Activated B cell treated with CpG ODN at 0.5 μM for 24 hours (primary cell): ENCODE measurements at regions of chr9 and their contacts with region 1.

Region 1: DNA sequence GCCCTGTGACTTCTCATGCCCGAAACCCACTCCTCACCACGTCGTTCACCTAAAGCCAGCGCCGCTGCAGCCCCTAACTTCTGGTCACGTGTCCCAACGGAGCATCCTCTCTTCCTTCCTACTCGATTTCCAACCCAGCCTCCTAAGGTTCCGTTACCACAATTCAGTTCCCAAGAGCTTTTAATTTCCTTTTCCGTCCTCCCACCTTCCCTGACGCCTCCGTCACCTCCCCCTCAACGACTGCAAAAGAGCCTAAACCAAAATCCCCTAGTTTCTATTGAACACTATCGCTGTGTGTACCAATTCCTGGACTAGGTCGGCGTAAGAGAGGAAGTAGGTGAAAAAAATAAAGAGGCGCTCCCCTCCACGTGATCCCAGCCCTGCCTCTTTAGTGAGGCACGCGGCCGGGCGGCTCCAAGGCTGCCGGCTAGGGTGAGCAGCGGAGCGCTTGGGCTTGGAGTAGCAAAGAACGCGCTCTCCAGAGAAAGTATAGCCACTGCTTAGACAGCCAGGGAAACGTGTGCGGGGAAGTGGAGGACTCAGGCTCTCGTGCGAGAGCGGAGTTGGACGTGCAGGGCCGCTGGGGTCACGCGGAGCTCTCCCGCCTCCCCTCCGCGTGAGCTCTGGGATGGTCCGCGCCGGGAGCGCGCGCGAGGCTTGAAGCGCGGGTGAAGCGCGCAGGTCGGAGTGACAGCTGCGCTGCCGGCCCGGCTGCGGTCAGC is at the starts of genes CENPP and NOL8:
- DNase-seq: peak; percentile 74
- ATAC-seq: peak; percentile 91
- H3K4me3 Mint-ChIP-seq: peak within 1 kb of the TSS; percentile 98
- H3K27ac Mint-ChIP-seq: peak within 1 kb of the TSS; percentile 98
- H3K4me1 Mint-ChIP-seq: peaks cover 27% of the 10 kb centered on the region
- H3K27me3 Mint-ChIP-seq: no peaks in the 10 kb centered on the region
- CTCF ChIP-seq: no peak
- total RNA-seq, gene CENPP: 5.7 and 5.9 TPM in 2 replicates
- total RNA-seq, gene NOL8: 67.0 and 78.4 TPM in 2 replicates

Region 2: GRCh38 chr9:92115071-92115858 is 210.2 kb before region 1 on chr9 and contains the start of gene SPTLC1:
- CTCF ChIA-PET with region 1: no interaction called
- POLR2A ChIA-PET with region 1: no interaction called
- intact Hi-C with region 1: loop called (anchors 1 kb)
- DNase-seq: peak; percentile 93
- ATAC-seq: peak; percentile 98
- H3K4me3 Mint-ChIP-seq: peak within 1 kb of the TSS; percentile 100
- H3K27ac Mint-ChIP-seq: peak within 1 kb of the TSS; percentile 99
- H3K4me1 Mint-ChIP-seq: peaks cover 24% of the 10 kb centered on the region
- H3K27me3 Mint-ChIP-seq: no peaks in the 10 kb centered on the region
- CTCF ChIP-seq: no peak
- total RNA-seq, gene SPTLC1: 40.8 and 41.0 TPM in 2 replicates

Region 3: DNA sequence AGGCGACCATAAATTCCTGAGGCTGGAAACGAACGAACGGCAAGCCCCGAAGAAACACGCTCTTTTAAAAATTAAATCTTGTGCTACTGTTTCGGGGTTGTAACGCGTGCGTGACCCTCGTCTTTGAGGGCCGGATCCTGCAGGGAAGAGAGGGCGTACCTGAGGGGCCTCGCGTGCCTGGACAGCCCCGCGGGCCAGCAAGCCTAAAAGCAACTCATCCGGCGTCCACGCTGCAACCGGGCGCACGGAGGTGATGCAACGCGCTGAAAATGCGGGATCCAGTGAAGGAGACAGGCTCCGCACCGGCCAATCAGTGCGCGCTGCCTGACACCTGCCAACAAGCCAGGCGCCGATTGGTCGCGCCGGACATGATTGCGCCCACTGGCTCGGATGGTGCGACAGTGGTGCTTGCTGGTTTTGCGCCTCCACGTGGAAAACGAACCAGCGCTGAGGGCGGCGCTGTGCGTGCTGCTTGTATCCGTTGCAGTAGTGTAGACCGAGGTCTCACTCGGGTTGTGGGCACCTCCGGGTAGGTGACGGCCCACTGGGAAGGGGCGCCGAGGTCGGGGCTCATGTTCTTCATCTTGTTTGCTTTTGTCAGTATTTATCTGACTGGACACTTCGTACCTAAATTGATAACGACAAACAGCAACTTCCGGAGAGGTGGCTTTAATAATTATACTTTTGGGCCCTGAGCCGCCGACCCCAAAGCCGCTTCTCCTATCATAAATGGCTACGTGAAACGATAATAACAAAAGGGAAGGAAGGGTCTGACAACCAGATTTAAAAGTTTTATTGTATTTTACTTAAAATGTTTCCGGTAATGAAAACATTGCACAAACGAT is 31.8 kb before region 1 on chr9 and contains the start of gene IARS1:
- CTCF ChIA-PET with region 1: no interaction called
- POLR2A ChIA-PET with region 1: interaction called, 11 read pairs
- intact Hi-C with region 1: loop called (anchors 1 kb)
- DNase-seq: peak; percentile 100
- ATAC-seq: peak; percentile 90
- H3K4me3 Mint-ChIP-seq: peak within 1 kb of the TSS; percentile 98
- H3K27ac Mint-ChIP-seq: peak within 1 kb of the TSS; percentile 98
- H3K4me1 Mint-ChIP-seq: peaks cover 76% of the 10 kb centered on the region
- H3K27me3 Mint-ChIP-seq: no peaks in the 10 kb centered on the region
- CTCF ChIP-seq: no peak
- total RNA-seq, gene IARS1: 176 and 205 TPM in 2 replicates

Region 4: DNA sequence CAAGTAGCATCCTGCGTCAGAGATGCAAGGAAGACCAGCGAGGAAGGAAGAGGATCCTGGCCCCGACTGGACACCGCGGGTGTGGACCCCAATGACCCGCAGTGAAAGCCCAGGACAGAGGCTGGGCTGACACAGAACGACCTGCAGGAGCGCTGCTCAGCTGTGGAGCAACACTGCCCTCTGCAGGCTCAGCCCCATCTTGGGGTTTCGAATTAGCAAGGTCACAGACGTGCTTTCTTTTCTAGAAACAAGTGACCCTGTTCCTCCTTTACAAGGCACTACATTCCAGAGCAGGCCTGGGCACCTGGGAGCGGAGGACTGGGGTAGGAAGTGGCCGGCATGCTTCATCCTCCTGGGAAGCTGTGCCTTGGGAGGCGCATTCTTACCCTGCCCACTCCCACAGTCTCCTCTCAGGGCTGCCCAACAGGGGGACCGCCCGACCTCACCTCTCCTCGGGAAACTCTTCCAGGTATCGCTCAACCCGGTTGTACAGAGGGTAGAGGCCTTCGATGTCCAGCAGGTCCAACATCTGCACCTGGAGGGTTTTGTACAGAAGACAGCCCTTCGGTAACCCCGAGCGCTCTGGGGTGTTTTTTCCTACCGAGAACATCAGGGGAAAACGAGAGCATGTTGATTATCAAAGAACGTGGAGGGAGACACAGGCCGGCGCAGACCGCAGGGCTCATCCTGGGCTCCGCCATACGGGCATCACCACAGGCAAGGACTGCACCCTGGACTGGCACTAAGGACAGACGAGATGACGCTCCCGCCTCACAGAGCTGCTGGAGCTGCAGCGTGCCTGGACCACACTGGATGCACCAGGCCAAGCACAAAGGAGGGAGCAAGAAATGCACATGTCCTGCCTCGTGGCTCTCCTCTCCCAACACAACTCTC is 309.5 kb after region 1 on chr9:
- CTCF ChIA-PET with region 1: no interaction called
- POLR2A ChIA-PET with region 1: no interaction called
- intact Hi-C with region 1: loop called (anchors 1 kb)
- DNase-seq: peak; percentile 41
- ATAC-seq: peak; percentile 81
- H3K4me3 Mint-ChIP-seq: no peak overlapping the region
- H3K27ac Mint-ChIP-seq: no peak overlapping the region
- H3K4me1 Mint-ChIP-seq: no peaks in the 10 kb centered on the region
- H3K27me3 Mint-ChIP-seq: no peaks in the 10 kb centered on the region
- CTCF ChIP-seq: no peak

Region 5: DNA sequence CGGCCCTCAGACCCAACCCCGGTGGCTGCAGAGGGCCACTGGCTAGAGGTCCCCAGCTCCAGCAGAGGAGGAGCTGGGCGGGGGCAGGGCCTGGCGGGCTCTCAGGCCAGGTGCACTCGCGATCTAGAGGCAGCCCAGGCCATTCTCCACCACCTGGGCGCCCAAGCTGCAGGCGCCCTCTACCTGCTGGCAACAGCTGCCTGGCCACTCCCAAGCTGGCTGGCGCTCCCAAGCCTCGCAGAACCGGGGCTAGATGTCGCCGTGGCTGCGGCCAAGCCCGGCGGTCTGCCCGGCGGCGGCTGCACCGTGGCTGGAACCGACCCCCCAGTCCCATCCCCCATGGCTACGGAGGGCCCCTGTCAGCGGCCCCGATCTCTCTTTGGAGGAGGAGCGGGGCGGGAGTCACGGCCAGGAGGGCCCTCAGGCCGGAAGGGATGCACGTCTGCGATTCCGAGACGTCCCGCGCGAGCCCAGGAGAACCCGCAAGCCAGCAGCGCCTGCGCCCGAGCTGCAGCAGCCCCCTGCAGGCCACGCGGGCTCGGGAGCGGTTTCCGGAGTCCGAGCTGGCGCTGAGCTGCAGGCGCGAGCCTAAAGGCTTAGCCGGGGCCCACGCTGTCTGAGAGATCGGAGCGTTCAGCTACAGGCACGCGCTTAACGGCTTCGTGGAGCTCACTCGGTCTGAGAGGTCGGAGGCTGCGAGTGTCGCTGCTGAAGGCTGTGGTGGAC is 483.5 kb after region 1 on chr9:
- CTCF ChIA-PET with region 1: no interaction called
- POLR2A ChIA-PET with region 1: no interaction called
- intact Hi-C with region 1: loop called (anchors 10 kb)
- DNase-seq: peak; percentile 62
- ATAC-seq: peak; percentile 72
- H3K4me3 Mint-ChIP-seq: peak overlapping the region; percentile 84
- H3K27ac Mint-ChIP-seq: peak overlapping the region; percentile 37
- H3K4me1 Mint-ChIP-seq: peaks cover 18% of the 10 kb centered on the region
- H3K27me3 Mint-ChIP-seq: peaks cover 39% of the 10 kb centered on the region
- CTCF ChIP-seq: no peak